Testis (tissue), 5 donors: ENCODE measurements at regions of chr2 and their contacts with region 1.

Region 1: DNA sequence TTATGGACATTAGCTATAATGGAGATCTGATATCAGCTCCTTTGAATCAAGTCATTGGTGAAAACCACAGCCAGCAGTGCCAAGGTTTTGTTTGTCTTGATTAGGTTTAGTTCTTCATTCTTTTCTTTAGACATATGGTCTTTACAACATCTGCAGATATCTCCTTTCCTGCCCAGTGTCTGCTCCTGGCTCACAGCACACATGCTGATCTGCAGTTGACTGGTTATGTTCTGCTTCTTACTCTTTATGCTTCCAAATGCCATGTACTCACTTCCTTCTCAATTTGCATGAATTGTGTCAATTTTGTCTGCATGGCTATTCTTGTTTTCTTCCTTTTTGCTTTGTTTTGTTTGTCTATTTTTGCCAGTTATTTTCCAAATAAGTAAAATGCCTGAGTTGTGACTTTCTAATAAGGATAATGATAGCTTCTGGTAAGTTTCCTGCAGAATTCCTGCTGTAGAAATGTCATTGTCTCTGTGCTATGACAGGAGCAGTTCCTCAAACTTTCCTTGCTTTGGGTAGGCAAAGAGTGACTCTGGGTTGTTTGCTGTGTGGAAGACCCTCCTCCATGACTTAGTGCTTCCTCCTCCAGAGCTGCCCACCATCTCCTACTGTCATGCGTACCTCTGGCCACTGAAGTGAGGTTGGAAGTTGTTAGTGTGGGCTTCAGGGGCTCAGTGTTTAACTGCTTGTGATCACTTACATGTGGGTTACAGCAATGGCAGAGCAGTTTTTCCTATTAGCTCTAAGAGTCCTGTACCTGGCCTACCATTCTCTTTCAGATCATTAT is 8.2 kb downstream of the ARHGAP25 start:
- DNase-seq: no peak
- H3K4me3 ChIP-seq: no peak overlapping the region
- H3K27ac ChIP-seq: no peak overlapping the region
- H3K4me1 ChIP-seq: no peaks in the 10 kb centered on the region
- H3K27me3 ChIP-seq: no peaks in the 10 kb centered on the region
- CTCF ChIP-seq: no peak
- POLR2A ChIP-seq: no peak

Region 2: DNA sequence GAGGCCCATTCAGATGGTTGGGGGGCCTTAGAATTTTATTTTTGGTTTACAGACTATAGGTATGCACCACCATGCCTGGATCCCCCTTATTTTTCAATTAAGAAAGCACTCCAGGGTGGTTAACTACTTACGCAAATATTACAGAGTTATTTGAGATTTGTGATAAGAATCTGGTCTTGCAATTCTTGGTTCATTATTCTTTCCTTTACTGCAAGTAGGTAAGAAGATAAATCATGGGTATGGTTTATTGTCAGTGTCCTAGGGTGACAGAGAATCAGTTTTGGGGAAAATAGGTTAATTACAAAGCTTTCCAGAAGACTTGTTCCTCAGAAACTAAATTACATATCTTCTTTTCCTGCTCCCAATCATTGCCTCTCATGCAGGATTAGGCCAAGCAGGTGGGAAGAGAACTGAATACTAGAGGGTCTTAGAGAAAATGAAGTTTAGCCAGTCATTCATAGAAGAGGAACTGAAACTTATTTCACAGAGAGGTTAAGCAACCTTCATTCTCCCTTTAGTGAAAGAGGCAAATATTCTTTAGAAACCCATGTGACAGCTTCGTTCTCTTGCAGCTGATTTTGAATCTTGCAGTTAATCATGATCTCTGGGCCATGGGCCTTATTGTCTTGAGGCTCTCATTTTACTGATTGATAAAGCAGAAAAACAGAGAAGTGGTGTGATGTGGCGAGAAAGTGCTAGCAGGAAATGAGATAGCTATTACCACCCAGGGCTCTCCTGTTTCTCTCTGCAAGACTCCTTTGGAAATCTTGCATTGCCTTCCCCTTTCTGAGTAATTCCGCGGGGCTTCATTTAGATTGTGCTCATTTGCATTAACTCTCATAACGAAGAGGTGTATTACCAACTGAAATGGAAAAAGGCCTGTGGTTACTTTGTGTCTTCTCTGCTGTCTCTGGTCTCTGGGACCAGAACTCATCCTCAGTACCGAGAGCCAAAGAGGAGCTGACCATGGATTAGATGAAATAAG is 53.0 kb before region 1 on chr2:
- intact Hi-C with region 1: no loop called
- DNase-seq: no peak
- H3K4me3 ChIP-seq: no peak overlapping the region
- H3K27ac ChIP-seq: no peak overlapping the region
- H3K4me1 ChIP-seq: no peaks in the 10 kb centered on the region
- H3K27me3 ChIP-seq: no peaks in the 10 kb centered on the region
- CTCF ChIP-seq: no peak
- POLR2A ChIP-seq: no peak

Region 3: DNA sequence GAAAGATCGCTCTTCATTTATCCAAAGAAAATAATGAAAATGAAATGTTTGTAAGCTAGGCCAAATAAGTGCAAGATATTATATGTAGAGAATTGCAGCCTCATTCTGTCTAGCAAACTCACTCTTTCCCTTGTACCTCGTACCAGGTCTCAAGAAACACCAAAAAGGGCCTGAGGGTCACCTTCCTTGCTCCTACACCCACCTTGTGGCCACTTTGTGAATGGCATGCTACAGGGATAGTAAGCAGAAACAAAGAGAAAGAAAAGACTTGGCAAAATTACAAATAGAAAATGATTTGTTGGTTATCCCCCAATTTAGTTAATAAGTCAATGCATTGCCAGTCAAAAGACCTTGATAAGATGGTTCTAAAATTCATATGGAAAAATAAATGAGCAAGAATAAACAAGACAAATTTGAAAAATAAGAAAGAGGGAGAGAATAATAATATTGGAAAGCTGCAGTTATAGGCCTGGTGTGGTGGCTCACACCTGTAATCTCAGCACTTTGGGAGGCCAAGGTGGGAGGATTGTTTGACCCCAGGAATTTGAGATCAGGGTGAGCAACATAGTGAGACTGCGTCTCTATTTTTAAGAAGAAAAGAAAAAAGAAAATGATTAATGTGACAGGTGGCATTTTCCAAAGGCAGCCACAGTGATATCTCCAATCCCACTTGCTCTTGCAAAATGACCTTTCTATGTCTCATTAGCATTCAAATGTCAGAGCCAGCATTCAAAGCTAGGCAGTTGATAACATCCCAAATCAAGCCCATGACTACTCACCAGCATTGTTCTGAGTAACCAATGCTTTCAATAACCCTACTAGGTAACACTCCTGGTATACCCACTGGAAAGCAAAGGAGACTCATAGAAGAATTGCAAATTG is 167.2 kb after region 1 on chr2:
- intact Hi-C with region 1: loop called (anchors 10 kb)
- DNase-seq: peak; percentile 88
- H3K4me3 ChIP-seq: no peak overlapping the region
- H3K27ac ChIP-seq: no peak overlapping the region
- H3K4me1 ChIP-seq: peaks cover 8% of the 10 kb centered on the region
- H3K27me3 ChIP-seq: no peaks in the 10 kb centered on the region
- CTCF ChIP-seq: peak; percentile 86 to 97 (median 88)
- POLR2A ChIP-seq: no peak